ENCODE measurements at regions of chr1 and their contacts with region 1.

Region 1: GRCh38 chr1:12619792-12620487 is 1.9 kb upstream of the DHRS3 start:
- DNase-seq: peak; percentile 87
- H3K4me3 Mint-ChIP-seq: peak overlapping the region; percentile 95
- H3K27ac Mint-ChIP-seq: peak overlapping the region; percentile 52
- H3K4me1 Mint-ChIP-seq: peaks cover 36% of the 10 kb centered on the region
- H3K27me3 Mint-ChIP-seq: no peaks in the 10 kb centered on the region

Region 2: GRCh38 chr1:12275369-12275768 is 344.6 kb before region 1 on chr1:
- CTCF ChIA-PET with region 1: interaction called, 31 read pairs
- POLR2A ChIA-PET with region 1: no interaction called
- intact Hi-C with region 1: loop called (anchors 1 kb)
- DNase-seq: peak; percentile 63
- H3K4me3 Mint-ChIP-seq: no peak overlapping the region
- H3K27ac Mint-ChIP-seq: no peak overlapping the region
- H3K4me1 Mint-ChIP-seq: no peaks in the 10 kb centered on the region
- H3K27me3 Mint-ChIP-seq: no peaks in the 10 kb centered on the region

Region 3: DNA sequence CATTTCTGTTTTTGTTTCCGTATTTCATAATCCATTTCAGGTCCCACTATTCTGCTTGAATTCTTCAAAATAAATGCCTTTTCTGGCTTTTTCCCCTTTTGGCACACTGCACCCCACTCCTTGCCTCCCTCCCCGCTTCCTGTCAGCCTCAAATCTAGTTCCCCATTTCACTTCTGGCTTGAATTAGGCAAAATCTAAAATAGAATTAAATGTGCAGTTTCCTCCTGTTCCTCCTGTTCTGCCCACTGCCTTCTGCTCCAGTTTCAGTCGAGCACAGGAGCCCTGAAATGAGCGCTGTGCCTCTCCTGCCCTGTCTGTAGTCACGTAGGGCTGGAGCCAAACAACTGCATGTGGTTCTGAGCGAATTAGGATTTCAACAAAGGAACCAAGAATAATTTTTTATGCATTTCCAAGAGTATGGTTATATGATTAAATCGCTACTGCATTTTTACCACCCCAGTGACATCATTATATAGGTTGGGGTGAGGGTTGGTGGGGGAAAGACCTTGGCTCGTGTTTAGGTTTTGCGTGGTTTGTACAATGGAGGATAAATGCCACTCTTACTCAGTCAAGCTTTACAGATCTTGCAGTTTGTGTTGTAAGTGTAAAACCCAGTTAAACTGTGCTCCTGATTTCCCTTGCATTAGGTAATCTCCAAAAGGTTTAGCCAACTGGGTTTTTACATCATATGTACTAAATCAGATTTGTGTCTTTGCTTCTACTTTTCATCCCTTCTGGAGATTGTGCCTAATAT is 275.2 kb before region 1 on chr1:
- CTCF ChIA-PET with region 1: interaction called, 7 read pairs
- POLR2A ChIA-PET with region 1: no interaction called
- intact Hi-C with region 1: loop called (anchors 1 kb)
- DNase-seq: peak; percentile 50
- H3K4me3 Mint-ChIP-seq: peak overlapping the region; percentile 65
- H3K27ac Mint-ChIP-seq: peak overlapping the region; percentile 85
- H3K4me1 Mint-ChIP-seq: peaks cover 55% of the 10 kb centered on the region
- H3K27me3 Mint-ChIP-seq: no peaks in the 10 kb centered on the region

Region 4: GRCh38 chr1:12434174-12434573 is 185.8 kb before region 1 on chr1:
- CTCF ChIA-PET with region 1: interaction called, 33 read pairs
- POLR2A ChIA-PET with region 1: interaction called, 17 read pairs
- intact Hi-C with region 1: loop called (anchors 1 kb)
- DNase-seq: peak; percentile 85
- H3K4me3 Mint-ChIP-seq: peak overlapping the region; percentile 41
- H3K27ac Mint-ChIP-seq: peak overlapping the region; percentile 83
- H3K4me1 Mint-ChIP-seq: peaks cover 62% of the 10 kb centered on the region
- H3K27me3 Mint-ChIP-seq: no peaks in the 10 kb centered on the region

Region 5: GRCh38 chr1:12511516-12512468 is 108.1 kb before region 1 on chr1:
- CTCF ChIA-PET with region 1: interaction called, 4 read pairs
- POLR2A ChIA-PET with region 1: interaction called, 26 read pairs
- intact Hi-C with region 1: loop called (anchors 1 kb)
- DNase-seq: no peak
- H3K4me3 Mint-ChIP-seq: peak overlapping the region; percentile 85
- H3K27ac Mint-ChIP-seq: peak overlapping the region; percentile 100
- H3K4me1 Mint-ChIP-seq: peaks cover 47% of the 10 kb centered on the region
- H3K27me3 Mint-ChIP-seq: no peaks in the 10 kb centered on the region

Region 6: GRCh38 chr1:12764016-12764415 is 144.1 kb after region 1 on chr1:
- CTCF ChIA-PET with region 1: no interaction called
- POLR2A ChIA-PET with region 1: no interaction called
- intact Hi-C with region 1: no loop called
- DNase-seq: no peak
- H3K4me3 Mint-ChIP-seq: no peak overlapping the region
- H3K27ac Mint-ChIP-seq: no peak overlapping the region
- H3K4me1 Mint-ChIP-seq: no peaks in the 10 kb centered on the region
- H3K27me3 Mint-ChIP-seq: peaks cover 17% of the 10 kb centered on the region

Measured in activated CD4-positive, alpha-beta memory T cell treated with anti-CD3 and anti-CD28 coated beads for 36 hours (primary cell).